Caco-2 (cell line): ENCODE measurements at regions of chr4 and their contacts with region 1.

Region 1: GRCh38 chr4:121096629-121097028 is 24.3 kb upstream of the NDNF start:
- DNase-seq: no peak
- H3K4me3 ChIP-seq: no peak overlapping the region
- H3K4me3 Mint-ChIP-seq: no peak overlapping the region
- H3K27ac Mint-ChIP-seq: no peak overlapping the region
- H3K4me1 ChIP-seq: no peaks in the 10 kb centered on the region
- H3K4me1 Mint-ChIP-seq: no peaks in the 10 kb centered on the region
- H3K27me3 ChIP-seq: no peaks in the 10 kb centered on the region
- H3K27me3 Mint-ChIP-seq: no peaks in the 10 kb centered on the region
- CTCF ChIP-seq: peak; percentile 36 to 39

Region 2: DNA sequence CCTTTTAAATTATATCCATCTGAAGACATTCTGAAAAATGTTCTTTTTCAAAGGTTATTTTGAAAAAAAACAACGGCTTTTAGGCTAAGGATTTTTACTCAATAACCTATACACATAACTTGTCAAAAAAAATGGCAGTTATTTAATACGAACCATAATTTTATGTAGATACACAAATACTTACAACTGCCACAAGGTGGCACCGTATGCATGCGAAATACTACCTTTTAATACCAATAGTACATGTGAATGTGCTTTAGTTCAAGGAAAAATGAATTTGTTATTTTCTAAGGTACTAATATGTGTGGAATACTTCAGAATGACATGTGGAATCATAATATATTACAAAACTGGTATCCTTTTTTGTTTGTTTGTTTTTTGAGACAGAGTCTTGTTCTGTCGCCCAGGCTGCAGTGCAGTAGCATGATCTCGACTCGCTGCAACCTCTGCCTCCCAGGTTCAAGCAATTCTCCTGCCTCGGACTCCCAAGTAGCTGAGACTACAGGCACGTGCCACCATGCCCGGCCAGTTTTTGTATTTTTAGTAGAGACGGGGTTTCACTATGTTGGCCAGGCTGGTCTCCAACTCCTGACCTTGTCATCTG is 1025.3 kb before region 1 on chr4:
- CTCF ChIA-PET with region 1: no interaction called
- POLR2A ChIA-PET with region 1: no interaction called
- intact Hi-C with region 1: loop called (anchors 1 kb)
- DNase-seq: peak; percentile 37 to 42
- H3K4me3 ChIP-seq: no peak overlapping the region
- H3K4me3 Mint-ChIP-seq: no peak overlapping the region
- H3K27ac Mint-ChIP-seq: no peak overlapping the region
- H3K4me1 ChIP-seq: peaks cover 5% of the 10 kb centered on the region; the same call in 1 of the 2 replicates
- H3K4me1 Mint-ChIP-seq: no peaks in the 10 kb centered on the region
- H3K27me3 ChIP-seq: no peaks in the 10 kb centered on the region
- H3K27me3 Mint-ChIP-seq: no peaks in the 10 kb centered on the region
- CTCF ChIP-seq: peak; percentile 38 to 65

Region 3: GRCh38 chr4:120718979-120719566 is 377.6 kb before region 1 on chr4:
- CTCF ChIA-PET with region 1: no interaction called
- POLR2A ChIA-PET with region 1: no interaction called
- intact Hi-C with region 1: loop called (anchors 1 kb)
- DNase-seq: peak in 1 of 2 experiments; percentile 46
- H3K4me3 ChIP-seq: no peak overlapping the region
- H3K4me3 Mint-ChIP-seq: no peak overlapping the region
- H3K27ac Mint-ChIP-seq: no peak overlapping the region
- H3K4me1 ChIP-seq: no peaks in the 10 kb centered on the region
- H3K4me1 Mint-ChIP-seq: peaks cover 19% of the 10 kb centered on the region
- H3K27me3 ChIP-seq: no peaks in the 10 kb centered on the region
- H3K27me3 Mint-ChIP-seq: no peaks in the 10 kb centered on the region
- CTCF ChIP-seq: peak; percentile 61 to 73

Region 4: GRCh38 chr4:120843849-120844527 is 252.6 kb before region 1 on chr4:
- CTCF ChIA-PET with region 1: no interaction called
- POLR2A ChIA-PET with region 1: no interaction called
- intact Hi-C with region 1: loop called (anchors 2 kb)
- DNase-seq: peak; percentile 38 to 42
- H3K4me3 ChIP-seq: no peak overlapping the region
- H3K4me3 Mint-ChIP-seq: no peak overlapping the region
- H3K27ac Mint-ChIP-seq: no peak overlapping the region
- H3K4me1 ChIP-seq: no peaks in the 10 kb centered on the region
- H3K4me1 Mint-ChIP-seq: no peaks in the 10 kb centered on the region
- H3K27me3 ChIP-seq: no peaks in the 10 kb centered on the region
- H3K27me3 Mint-ChIP-seq: no peaks in the 10 kb centered on the region
- CTCF ChIP-seq: peak; percentile 38 to 65

Region 5: DNA sequence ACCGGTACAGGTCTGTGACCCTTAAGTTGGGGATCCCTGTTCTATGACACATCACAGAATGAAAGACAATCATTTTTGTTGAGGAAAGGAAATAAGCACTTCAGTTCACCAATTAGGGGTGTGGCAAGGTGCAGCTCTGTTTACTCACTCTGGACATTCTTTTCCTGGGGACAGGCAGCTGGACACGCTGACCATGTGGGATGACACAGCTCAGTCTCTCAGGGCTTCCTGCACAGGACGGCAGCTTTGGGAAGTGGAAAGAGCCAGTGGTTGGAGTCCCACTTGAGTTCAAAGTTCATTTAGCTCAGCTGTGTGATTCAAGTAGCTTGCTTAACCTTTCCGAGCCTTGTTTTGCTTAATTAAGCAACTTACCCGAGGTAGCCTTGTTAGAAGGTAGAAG is 80.0 kb before region 1 on chr4:
- CTCF ChIA-PET with region 1: no interaction called
- POLR2A ChIA-PET with region 1: no interaction called
- intact Hi-C with region 1: loop called (anchors 5 kb)
- DNase-seq: peak; percentile 18 to 62
- H3K4me3 ChIP-seq: no peak overlapping the region
- H3K4me3 Mint-ChIP-seq: no peak overlapping the region
- H3K27ac Mint-ChIP-seq: no peak overlapping the region
- H3K4me1 ChIP-seq: peaks cover 6% of the 10 kb centered on the region; the same call in 1 of the 2 replicates
- H3K4me1 Mint-ChIP-seq: peaks cover 7% of the 10 kb centered on the region
- H3K27me3 ChIP-seq: no peaks in the 10 kb centered on the region
- H3K27me3 Mint-ChIP-seq: no peaks in the 10 kb centered on the region
- CTCF ChIP-seq: no peak

Region 6: DNA sequence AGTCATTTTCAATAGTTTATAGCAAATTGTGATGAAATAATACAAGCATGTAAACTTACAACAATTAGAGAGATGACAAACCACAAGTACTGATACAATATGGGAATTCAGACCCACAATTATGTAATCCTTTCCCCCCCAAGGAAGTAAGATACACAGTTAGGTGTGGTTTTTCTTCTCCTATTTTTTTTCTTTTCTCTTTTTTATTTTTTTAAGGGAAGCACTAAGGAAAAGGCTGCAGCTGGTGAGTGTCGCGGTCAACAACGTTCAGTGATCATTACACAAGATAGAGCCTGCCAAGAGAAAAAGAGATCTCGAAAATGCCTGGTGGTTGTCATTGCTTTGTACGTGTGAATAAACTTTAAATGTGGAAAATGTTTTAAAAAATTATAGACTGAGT is 34.1 kb before region 1 on chr4:
- CTCF ChIA-PET with region 1: no interaction called
- POLR2A ChIA-PET with region 1: no interaction called
- intact Hi-C with region 1: no loop called
- DNase-seq: no peak
- H3K4me3 ChIP-seq: no peak overlapping the region
- H3K4me3 Mint-ChIP-seq: no peak overlapping the region
- H3K27ac Mint-ChIP-seq: no peak overlapping the region
- H3K4me1 ChIP-seq: no peaks in the 10 kb centered on the region
- H3K4me1 Mint-ChIP-seq: no peaks in the 10 kb centered on the region
- H3K27me3 ChIP-seq: no peaks in the 10 kb centered on the region
- H3K27me3 Mint-ChIP-seq: no peaks in the 10 kb centered on the region
- CTCF ChIP-seq: no peak

Region 7: GRCh38 chr4:121299367-121299766 is 202.7 kb after region 1 on chr4:
- CTCF ChIA-PET with region 1: no interaction called
- POLR2A ChIA-PET with region 1: no interaction called
- intact Hi-C with region 1: no loop called
- DNase-seq: no peak
- H3K4me3 ChIP-seq: no peak overlapping the region
- H3K4me3 Mint-ChIP-seq: no peak overlapping the region
- H3K27ac Mint-ChIP-seq: no peak overlapping the region
- H3K4me1 ChIP-seq: peaks cover 15% of the 10 kb centered on the region
- H3K4me1 Mint-ChIP-seq: peaks cover 6% of the 10 kb centered on the region
- H3K27me3 ChIP-seq: no peaks in the 10 kb centered on the region
- H3K27me3 Mint-ChIP-seq: no peaks in the 10 kb centered on the region
- CTCF ChIP-seq: no peak